ENCODE measurements at regions of chr2 and their contacts with region 1.

Region 1: GRCh38 chr2:60439219-60439974 is 114.1 kb downstream of the BCL11A start:
- DNase-seq: peak; percentile 89
- CTCF ChIP-seq: peak; percentile 63

Region 2: GRCh38 chr2:60453301-60453700 is 13.9 kb after region 1 on chr2:
- CTCF ChIA-PET with region 1: interaction called, 20 read pairs
- POLR2A ChIA-PET with region 1: no interaction called
- DNase-seq: no peak
- CTCF ChIP-seq: no peak

Region 3: DNA sequence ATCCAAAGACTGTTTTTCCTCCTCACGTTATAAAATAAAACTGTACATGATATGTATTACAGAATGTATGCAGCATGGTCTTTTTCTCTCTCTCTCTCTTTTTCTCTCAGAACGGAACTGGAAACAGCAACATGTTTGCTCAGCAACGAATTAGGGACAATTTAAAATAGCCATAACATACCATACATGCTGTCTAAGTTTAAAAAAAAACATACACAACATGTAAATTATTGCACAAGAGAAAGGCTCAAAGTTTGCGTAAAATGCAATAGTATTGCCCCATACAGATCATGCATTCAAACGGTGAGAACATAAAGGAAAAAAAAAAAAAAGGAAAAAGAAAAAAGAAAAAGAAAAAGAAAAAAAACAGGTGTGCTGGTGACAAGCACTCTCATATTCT is 20.5 kb after region 1 on chr2:
- CTCF ChIA-PET with region 1: interaction called, 20 read pairs
- POLR2A ChIA-PET with region 1: no interaction called
- DNase-seq: no peak
- CTCF ChIP-seq: no peak

Region 4: DNA sequence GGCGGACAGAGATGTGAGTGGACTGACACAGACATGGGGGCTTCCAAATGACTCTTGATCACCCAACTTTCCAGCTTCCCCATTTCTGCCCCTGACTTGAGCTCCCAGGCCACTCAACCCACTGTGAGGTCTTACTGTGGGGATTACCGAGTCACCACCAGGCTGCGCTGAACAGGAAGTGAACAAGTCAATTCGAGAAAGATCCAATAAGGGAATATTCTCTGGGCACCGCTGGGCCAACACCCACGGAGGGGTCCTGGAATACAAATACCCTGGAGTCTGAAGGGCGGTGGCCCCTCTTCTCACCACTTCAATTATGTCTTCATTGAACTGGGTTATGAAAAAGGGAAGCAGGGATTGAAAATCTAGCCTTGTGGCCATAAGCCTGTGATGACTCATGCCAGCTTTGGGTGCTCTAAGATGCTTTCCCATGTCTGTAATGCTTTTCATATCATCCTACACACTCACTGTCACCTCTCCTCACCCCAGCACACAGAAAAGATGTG is 76.4 kb after region 1 on chr2:
- CTCF ChIA-PET with region 1: interaction called, 10 read pairs
- POLR2A ChIA-PET with region 1: no interaction called
- DNase-seq: peak; percentile 75
- CTCF ChIP-seq: peak; percentile 3